Pancreas (tissue), 10 donors: ENCODE measurements at regions of chr1 and their contacts with region 1.

Region 1: GRCh38 chr1:223695941-223696340 is 16.4 kb upstream of the CAPN2 start:
- DNase-seq: no peak
- ATAC-seq: no peak
- H3K4me3 ChIP-seq: no peak overlapping the region
- H3K27ac ChIP-seq: no peak overlapping the region
- H3K4me1 ChIP-seq: no peaks in the 10 kb centered on the region
- H3K27me3 ChIP-seq: no peaks in the 10 kb centered on the region
- CTCF ChIP-seq: no peak

Region 2: GRCh38 chr1:222950892-222951291 is 745.0 kb before region 1 on chr1:
- intact Hi-C with region 1: no loop called
- DNase-seq: no peak
- ATAC-seq: peak in 3 of 4 donors; percentile 44 to 68 (median 54)
- H3K4me3 ChIP-seq: no peak overlapping the region
- H3K27ac ChIP-seq: no peak overlapping the region
- H3K4me1 ChIP-seq: no peaks in the 10 kb centered on the region
- H3K27me3 ChIP-seq: no peaks in the 10 kb centered on the region
- CTCF ChIP-seq: no peak

Region 3: GRCh38 chr1:223639331-223639749 is 56.6 kb before region 1 on chr1:
- intact Hi-C with region 1: no loop called
- DNase-seq: no peak
- ATAC-seq: peak; percentile 55 to 80 (median 70)
- H3K4me3 ChIP-seq: no peak overlapping the region
- H3K27ac ChIP-seq: peak overlapping the region in 1 of 4 donors; percentile 10
- H3K4me1 ChIP-seq: peaks cover 0 to 13% (median 9%) of the 10 kb centered on the region in 3 donors
- H3K27me3 ChIP-seq: no peaks in the 10 kb centered on the region
- CTCF ChIP-seq: no peak

Region 4: DNA sequence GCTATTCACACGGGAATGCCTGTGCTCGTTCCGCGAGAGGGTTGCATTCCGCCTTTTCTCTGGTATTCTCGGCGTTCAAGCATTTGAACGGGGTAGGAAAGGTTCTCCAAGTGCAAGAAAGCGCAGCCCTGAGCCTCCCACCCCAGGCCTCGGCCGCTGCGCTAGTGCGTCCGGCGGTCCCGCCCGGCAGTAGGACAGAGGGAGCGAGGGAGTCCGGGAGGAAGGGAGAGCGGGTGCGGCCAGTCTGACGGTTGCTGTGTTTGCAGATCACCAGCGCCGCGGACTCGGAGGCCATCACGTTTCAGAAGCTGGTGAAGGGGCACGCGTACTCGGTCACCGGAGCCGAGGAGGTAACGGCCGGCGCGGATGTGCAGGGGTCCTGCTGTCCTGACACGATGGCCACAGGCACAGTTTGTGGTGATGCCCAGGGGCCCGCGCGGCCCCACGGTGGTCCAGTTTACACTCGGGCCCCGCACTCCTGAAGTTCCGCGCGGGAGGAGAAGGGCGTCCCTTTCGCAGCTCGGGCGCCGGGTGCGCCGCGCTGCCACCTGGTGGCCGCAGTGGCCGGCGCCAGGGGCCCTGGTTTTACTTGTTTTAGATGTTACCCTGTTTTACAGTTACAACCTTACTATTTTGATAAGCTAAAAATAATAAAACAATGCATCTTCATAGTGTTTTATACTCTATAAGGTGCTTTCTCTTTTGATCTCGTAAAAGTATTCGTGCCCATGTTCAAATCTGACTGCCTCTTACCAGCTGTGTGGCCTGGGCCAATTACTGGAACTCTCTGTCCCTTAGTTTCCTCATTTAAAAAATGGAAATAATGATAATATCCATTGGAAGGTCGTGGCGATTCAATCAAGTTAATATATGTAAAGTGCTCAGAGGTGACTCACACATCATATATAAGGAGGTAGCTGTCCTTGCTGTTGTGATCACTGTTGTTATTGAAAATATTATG is 53.1 kb after region 1 on chr1:
- intact Hi-C with region 1: loop called in 1 of 3 experiments (anchors 5 kb)
- DNase-seq: peak in 5 of 6 donors; percentile 29 to 87 (median 54)
- ATAC-seq: peak; percentile 77 to 92 (median 90)
- H3K4me3 ChIP-seq: peak overlapping the region; percentile 2 to 33 (median 13)
- H3K27ac ChIP-seq: peak overlapping the region in 2 of 4 donors; percentile 28 to 55
- H3K4me1 ChIP-seq: peaks cover 0 to 7% (median 0%) of the 10 kb centered on the region in 3 donors
- H3K27me3 ChIP-seq: no peaks in the 10 kb centered on the region
- CTCF ChIP-seq: peak; percentile 76 to 93 (median 82)

Region 5: GRCh38 chr1:223831755-223832636 is 136.1 kb after region 1 on chr1:
- intact Hi-C with region 1: no loop called
- DNase-seq: no peak
- ATAC-seq: peak; percentile 50 to 72 (median 64)
- H3K4me3 ChIP-seq: no peak overlapping the region
- H3K27ac ChIP-seq: peak overlapping the region in 2 of 4 donors; percentile 52 to 65
- H3K4me1 ChIP-seq: peaks cover 0 to 59% (median 21%) of the 10 kb centered on the region in 3 donors
- H3K27me3 ChIP-seq: no peaks in the 10 kb centered on the region
- CTCF ChIP-seq: no peak